ENCODE measurements at regions of chr16 and their contacts with region 1.

Region 1: DNA sequence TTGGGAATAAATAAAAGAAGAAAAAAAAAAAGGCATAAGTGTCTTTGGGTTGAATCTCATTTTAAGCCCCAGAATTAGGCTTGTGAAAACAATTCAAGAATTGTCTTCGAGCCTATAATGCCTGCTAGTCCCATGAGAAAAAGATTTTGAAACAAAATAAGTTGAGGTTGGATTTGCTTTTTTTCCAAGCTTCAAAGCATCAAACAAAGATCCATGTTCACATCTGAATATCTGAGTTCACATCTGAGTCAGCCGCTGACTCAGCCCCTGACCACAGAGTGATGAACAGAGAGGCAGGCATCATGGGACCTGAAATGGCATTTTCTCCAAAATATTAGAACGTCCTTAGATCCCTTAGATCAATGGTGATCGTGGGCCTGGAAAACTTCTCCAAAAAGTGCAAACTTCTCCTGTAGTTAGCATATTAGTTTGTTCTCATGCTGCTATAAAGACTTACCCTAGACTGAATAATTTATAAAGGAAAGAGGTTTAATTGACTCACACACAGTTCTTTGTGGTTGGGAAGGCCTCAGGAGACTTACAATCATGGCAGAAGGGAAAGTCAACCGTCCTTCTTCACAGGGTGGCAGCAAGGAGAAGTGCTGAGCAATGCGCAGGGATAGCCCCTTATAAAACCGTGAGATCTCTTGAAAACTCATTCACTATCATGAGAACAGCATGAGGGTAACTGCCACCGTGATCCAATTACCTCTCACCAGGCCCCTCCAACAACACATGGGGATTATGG is 294.6 kb upstream of the HSBP1 start:
- DNase-seq: no peak
- H3K4me3 ChIP-seq: no peak overlapping the region
- H3K27ac ChIP-seq: no peak overlapping the region
- H3K4me1 ChIP-seq: no peaks in the 10 kb centered on the region
- H3K27me3 ChIP-seq: no peaks in the 10 kb centered on the region
- CTCF ChIP-seq: no peak
- POLR2A ChIP-seq: no peak

Region 2: DNA sequence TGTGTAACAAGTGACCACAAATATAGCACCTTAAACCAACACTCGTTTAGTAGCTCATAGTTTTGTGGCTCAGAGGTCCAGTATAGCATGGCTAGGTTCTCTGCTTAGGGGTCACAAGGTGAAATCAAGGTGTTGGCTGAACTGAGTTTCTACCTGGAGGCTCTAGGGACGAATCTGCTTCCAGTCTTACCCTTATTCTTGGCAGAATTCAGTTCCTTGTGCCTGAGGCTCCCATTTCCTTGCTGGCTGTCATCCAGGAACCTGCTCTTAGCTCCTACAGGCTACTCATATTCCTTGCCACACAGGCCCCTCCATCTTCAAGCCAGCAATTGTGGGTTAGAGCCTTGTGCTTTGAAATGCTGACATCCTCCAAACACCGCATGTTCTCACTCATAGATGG is 1098.7 kb before region 1 on chr16:
- intact Hi-C with region 1: no loop called
- DNase-seq: no peak
- H3K4me3 ChIP-seq: no peak overlapping the region
- H3K27ac ChIP-seq: no peak overlapping the region
- H3K4me1 ChIP-seq: no peaks in the 10 kb centered on the region
- H3K27me3 ChIP-seq: no peaks in the 10 kb centered on the region
- CTCF ChIP-seq: no peak
- POLR2A ChIP-seq: no peak

Region 3: DNA sequence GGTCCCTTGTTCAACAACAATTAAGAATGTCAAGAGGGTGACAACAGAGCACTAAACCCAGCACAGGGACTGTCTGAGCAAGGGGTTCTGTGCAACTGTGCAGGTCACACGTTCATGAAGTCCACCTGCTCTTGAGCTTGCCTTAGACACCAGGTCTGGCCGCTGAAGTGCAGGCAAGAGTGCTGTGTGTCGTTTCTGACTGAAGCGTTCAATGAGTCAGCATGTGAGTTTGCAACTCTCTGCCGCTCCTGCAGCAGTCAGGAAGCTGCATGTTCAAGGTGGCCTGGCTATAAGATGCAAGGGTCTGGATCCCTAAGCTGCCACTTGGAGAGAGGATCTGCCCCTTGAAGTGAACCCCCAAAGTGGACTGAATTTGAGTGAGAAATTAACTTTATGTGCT is 38.1 kb before region 1 on chr16:
- intact Hi-C with region 1: no loop called
- DNase-seq: peak in 1 of 2 donors; percentile 67
- H3K4me3 ChIP-seq: no peak overlapping the region
- H3K27ac ChIP-seq: no peak overlapping the region
- H3K4me1 ChIP-seq: no peaks in the 10 kb centered on the region
- H3K27me3 ChIP-seq: no peaks in the 10 kb centered on the region
- CTCF ChIP-seq: no peak
- POLR2A ChIP-seq: no peak

Region 4: GRCh38 chr16:85027349-85027957 is 1514.3 kb after region 1 on chr16 and contains the start of gene KIAA0513:
- intact Hi-C with region 1: loop called (anchors 10 kb)
- DNase-seq: no peak
- H3K4me3 ChIP-seq: peak within 1 kb of the TSS; percentile 62 to 76
- H3K27ac ChIP-seq: peak within 1 kb of the TSS; percentile 90
- H3K4me1 ChIP-seq: peaks cover 34% of the 10 kb centered on the region
- H3K27me3 ChIP-seq: no peaks in the 10 kb centered on the region
- CTCF ChIP-seq: peak in 2 of 3 experiments; percentile 23 to 31
- POLR2A ChIP-seq: peak; percentile 82 to 98
- total RNA-seq, gene KIAA0513: 26.8 TPM